Endothelial cell of umbilical vein (primary cell): ENCODE measurements at regions of chr7 and their contacts with region 1.

Region 1: GRCh38 chr7:154927624-154928143 is 75.2 kb downstream of the PAXIP1 start:
- DNase-seq: peak; percentile 86
- H3K4me3 ChIP-seq: peak overlapping the region; percentile 45 to 91 (median 89)
- H3K27ac ChIP-seq: peak overlapping the region; percentile 49
- H3K4me1 ChIP-seq: peaks cover 8% of the 10 kb centered on the region
- H3K27me3 ChIP-seq: peaks cover 0 to 5% of the 10 kb centered on the region in 2 experiments
- CTCF ChIP-seq: peak; percentile 45 to 53
- POLR2A ChIP-seq: no peak

Region 2: GRCh38 chr7:154178890-154179289 is 748.8 kb before region 1 on chr7:
- CTCF ChIA-PET with region 1: no interaction called
- POLR2A ChIA-PET with region 1: no interaction called
- dilution Hi-C with region 1: no loop called
- intact Hi-C with region 1: no loop called
- DNase-seq: no peak
- H3K4me3 ChIP-seq: no peak overlapping the region
- H3K27ac ChIP-seq: no peak overlapping the region
- H3K4me1 ChIP-seq: no peaks in the 10 kb centered on the region
- H3K27me3 ChIP-seq: no peaks in the 10 kb centered on the region
- CTCF ChIP-seq: no peak
- POLR2A ChIP-seq: no peak

Region 3: DNA sequence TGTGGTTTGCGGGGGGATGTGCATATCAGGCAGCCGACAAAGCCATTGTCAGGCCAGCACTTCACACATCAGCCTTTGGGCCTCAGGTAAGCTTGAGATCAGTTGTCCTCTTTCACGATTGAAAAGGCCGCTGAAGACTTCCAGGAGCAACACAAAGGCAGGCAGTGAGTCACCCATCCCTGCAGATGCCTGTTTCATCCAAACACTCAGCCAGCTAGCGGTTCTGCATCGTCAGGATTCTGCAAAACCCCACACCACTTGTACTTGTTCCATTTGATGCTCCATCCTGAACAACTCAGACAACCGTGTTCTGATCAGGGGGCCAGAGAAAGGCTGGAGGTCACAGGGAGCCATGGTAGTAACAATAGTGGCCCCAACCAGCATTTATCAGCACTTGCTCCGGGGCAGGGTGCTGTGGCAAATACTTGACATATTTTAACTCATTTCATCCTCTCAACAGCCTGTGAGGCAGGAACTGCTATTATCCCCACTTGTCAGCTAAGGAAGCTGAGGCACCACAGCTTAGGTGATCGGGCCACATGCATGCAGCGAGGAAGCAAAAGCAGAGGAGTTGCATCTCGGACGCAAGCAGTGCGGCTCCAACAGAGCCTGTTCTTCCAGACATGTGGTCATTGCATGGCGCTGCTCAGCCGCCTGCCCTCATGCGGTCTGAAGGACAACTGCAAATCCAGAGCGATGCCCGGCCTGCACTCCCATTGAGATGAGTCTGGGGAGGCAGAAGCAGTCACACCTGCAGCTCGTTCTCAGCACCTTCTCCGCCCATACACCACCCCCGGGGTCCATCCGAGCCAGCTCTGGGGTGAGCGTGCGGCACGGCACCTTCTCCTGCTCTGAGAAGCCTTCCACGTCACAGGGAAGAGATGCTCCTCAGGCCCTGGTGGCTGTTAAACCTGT is 69.7 kb before region 1 on chr7:
- CTCF ChIA-PET with region 1: no interaction called
- POLR2A ChIA-PET with region 1: no interaction called
- dilution Hi-C with region 1: no loop called
- intact Hi-C with region 1: no loop called
- DNase-seq: no peak
- H3K4me3 ChIP-seq: no peak overlapping the region
- H3K27ac ChIP-seq: no peak overlapping the region
- H3K4me1 ChIP-seq: no peaks in the 10 kb centered on the region
- H3K27me3 ChIP-seq: no peaks in the 10 kb centered on the region
- CTCF ChIP-seq: no peak
- POLR2A ChIP-seq: no peak

Region 4: GRCh38 chr7:155003376-155004214 is 75.9 kb after region 1 on chr7:
- CTCF ChIA-PET with region 1: interaction called, 10 read pairs
- POLR2A ChIA-PET with region 1: no interaction called
- dilution Hi-C with region 1: no loop called
- intact Hi-C with region 1: loop called (anchors 1 kb)
- DNase-seq: peak; percentile 71
- H3K4me3 ChIP-seq: peak overlapping the region; percentile 91 to 94 (median 92)
- H3K27ac ChIP-seq: peak overlapping the region; percentile 87
- H3K4me1 ChIP-seq: peaks cover 11% of the 10 kb centered on the region
- H3K27me3 ChIP-seq: no peaks in the 10 kb centered on the region
- CTCF ChIP-seq: no peak
- POLR2A ChIP-seq: peak; percentile 75

Region 5: GRCh38 chr7:155166673-155167370 is 239.1 kb after region 1 on chr7:
- CTCF ChIA-PET with region 1: no interaction called
- POLR2A ChIA-PET with region 1: no interaction called
- dilution Hi-C with region 1: no loop called
- intact Hi-C with region 1: loop called (anchors 1 kb)
- DNase-seq: peak; percentile 84
- H3K4me3 ChIP-seq: no peak overlapping the region
- H3K27ac ChIP-seq: no peak overlapping the region
- H3K4me1 ChIP-seq: no peaks in the 10 kb centered on the region
- H3K27me3 ChIP-seq: no peaks in the 10 kb centered on the region
- CTCF ChIP-seq: no peak
- POLR2A ChIP-seq: no peak

Region 6: DNA sequence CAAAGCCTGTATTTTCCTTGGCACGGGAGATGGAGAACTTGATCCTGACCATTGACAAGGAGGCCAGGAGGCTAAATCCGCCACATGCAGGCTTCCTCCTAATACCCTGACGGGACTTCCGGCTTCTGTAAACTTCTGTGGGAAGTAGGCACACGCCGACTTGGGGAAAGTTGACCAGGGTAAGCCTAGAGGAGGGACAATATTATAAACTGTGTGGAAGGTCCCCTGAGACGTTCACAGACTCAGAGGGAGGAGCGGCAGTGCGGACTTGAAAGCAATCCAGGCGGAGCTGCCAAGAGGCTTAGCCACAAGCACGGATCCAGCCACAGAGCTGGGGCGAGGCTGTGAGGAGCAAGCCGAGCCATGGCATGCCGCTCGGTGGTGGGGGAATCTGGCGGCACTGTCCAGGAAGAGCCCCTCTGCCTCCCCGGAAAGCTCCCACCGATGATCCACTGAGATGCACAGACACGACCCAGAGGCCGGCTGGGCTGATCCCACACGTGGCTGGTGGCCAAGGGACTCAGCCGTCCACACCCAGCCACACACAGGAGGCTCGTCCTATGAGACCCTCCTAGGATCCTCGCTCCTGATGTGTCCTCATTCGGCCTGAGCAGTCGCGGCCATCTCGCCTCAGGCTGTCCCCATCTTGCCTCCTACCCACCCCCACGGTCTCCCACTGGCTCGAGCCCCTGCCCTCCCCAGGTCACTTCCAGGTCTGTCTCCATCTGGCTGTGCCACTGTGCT is 330.0 kb after region 1 on chr7:
- CTCF ChIA-PET with region 1: interaction called, 3 read pairs
- POLR2A ChIA-PET with region 1: no interaction called
- dilution Hi-C with region 1: no loop called
- intact Hi-C with region 1: loop called (anchors 5 kb)
- DNase-seq: peak; percentile 73
- H3K4me3 ChIP-seq: no peak overlapping the region
- H3K27ac ChIP-seq: no peak overlapping the region
- H3K4me1 ChIP-seq: peaks cover 12% of the 10 kb centered on the region
- H3K27me3 ChIP-seq: no peaks in the 10 kb centered on the region
- CTCF ChIP-seq: no peak
- POLR2A ChIP-seq: no peak

Region 7: GRCh38 chr7:155356323-155357105 is 428.8 kb after region 1 on chr7:
- CTCF ChIA-PET with region 1: interaction called, 62 read pairs
- POLR2A ChIA-PET with region 1: no interaction called
- dilution Hi-C with region 1: no loop called
- intact Hi-C with region 1: loop called (anchors 1 kb)
- DNase-seq: peak; percentile 30
- H3K4me3 ChIP-seq: no peak overlapping the region
- H3K27ac ChIP-seq: no peak overlapping the region
- H3K4me1 ChIP-seq: no peaks in the 10 kb centered on the region
- H3K27me3 ChIP-seq: peaks cover 0 to 3% of the 10 kb centered on the region in 2 experiments
- CTCF ChIP-seq: peak; percentile 43 to 44
- POLR2A ChIP-seq: no peak